ENCODE measurements at regions of chr6 and their contacts with region 1.

Region 1: DNA sequence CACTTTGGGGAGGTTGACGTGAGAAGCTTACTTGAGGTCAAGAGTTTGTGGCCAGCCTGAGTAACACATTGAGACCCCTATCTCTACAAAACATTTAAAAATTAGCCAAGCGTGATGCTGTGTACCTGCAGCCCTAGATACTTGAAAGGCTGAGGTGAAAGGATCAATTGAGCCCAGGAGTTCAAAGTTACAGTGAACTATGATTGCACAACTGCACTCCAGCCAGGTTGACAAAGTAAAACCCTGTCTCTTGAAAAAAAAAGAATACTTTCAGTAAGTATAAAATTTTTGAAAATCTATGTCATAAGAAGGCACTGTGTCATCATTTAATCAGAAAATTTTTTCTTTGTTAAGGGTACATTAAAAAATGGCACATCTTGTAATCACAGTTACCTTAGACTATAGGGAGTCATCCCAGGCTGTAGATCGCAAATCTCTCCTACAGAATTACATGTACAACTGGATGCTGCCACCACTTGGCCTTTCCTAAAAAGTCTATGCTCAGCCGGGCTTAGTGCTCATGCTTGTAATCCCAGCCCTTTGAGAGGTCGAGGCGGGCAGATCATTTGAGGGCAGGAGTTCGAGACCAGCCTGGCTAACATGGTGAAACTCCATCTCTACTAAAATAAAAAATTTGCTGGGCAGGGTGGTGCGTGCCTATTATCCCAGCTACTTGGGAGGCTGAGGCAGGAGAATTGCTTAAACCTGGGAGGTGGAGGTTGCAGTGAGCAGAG is 17.0 kb upstream of the MRS2 start:
- DNase-seq: peak; percentile 98
- ATAC-seq: peak; percentile 83
- H3K4me3 ChIP-seq: peak overlapping the region in 1 of 3 experiments; percentile 34; a peak in 1 of 6 replicates
- H3K27ac ChIP-seq: peak overlapping the region; percentile 79
- H3K4me1 ChIP-seq: peaks cover 84% of the 10 kb centered on the region
- H3K27me3 ChIP-seq: no peaks in the 10 kb centered on the region
- CTCF ChIP-seq: peak; percentile 87
- EP300 ChIP-seq: peak; percentile 94 to 98
- POLR2A ChIP-seq: no peak
- RAD21 ChIP-seq: peak; percentile 63

Region 2: DNA sequence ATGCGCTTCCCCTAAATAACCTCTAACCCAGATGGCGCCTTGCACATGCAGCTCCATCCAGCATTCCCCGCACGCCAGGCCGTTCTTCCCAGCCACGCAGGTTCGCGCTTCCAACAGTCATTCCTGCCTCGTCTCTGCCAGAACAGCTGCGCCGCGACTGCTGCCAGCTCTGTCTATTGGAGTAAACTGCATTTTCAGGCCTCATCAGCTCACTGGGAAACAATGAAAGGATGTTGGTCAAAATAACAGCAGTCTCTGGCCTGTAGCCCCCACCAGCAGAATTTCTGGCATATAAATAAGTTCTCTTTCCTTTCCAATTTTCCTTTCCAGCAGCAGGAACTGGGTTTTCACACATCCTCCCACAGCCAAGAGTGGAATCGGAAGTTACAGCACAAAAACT is 245.1 kb before region 1 on chr6:
- CTCF ChIA-PET with region 1: no interaction called
- POLR2A ChIA-PET with region 1: no interaction called
- in situ Hi-C with region 1: no loop called
- intact Hi-C with region 1: loop called (anchors 10 kb)
- DNase-seq: no peak
- ATAC-seq: no peak
- H3K4me3 ChIP-seq: no peak overlapping the region
- H3K27ac ChIP-seq: no peak overlapping the region
- H3K4me1 ChIP-seq: peaks cover 15% of the 10 kb centered on the region
- H3K27me3 ChIP-seq: no peaks in the 10 kb centered on the region
- CTCF ChIP-seq: no peak
- EP300 ChIP-seq: no peak
- POLR2A ChIP-seq: no peak
- RAD21 ChIP-seq: no peak

Region 3: GRCh38 chr6:24332306-24332705 is 53.4 kb before region 1 on chr6:
- CTCF ChIA-PET with region 1: no interaction called
- POLR2A ChIA-PET with region 1: no interaction called
- in situ Hi-C with region 1: no loop called
- intact Hi-C with region 1: loop called (anchors 1 kb)
- DNase-seq: peak; percentile 54
- ATAC-seq: no peak
- H3K4me3 ChIP-seq: no peak overlapping the region
- H3K27ac ChIP-seq: peak overlapping the region; percentile 10
- H3K4me1 ChIP-seq: peaks cover 75% of the 10 kb centered on the region
- H3K27me3 ChIP-seq: no peaks in the 10 kb centered on the region
- CTCF ChIP-seq: no peak
- EP300 ChIP-seq: no peak
- POLR2A ChIP-seq: no peak
- RAD21 ChIP-seq: no peak

Region 4: GRCh38 chr6:24340998-24341938 is 44.4 kb before region 1 on chr6:
- CTCF ChIA-PET with region 1: no interaction called
- POLR2A ChIA-PET with region 1: no interaction called
- in situ Hi-C with region 1: no loop called
- intact Hi-C with region 1: loop called (anchors 1 kb)
- DNase-seq: peak; percentile 100
- ATAC-seq: peak; percentile 99
- H3K4me3 ChIP-seq: peak overlapping the region in 1 of 3 experiments; percentile 8; a peak in 1 of 6 replicates
- H3K27ac ChIP-seq: peak overlapping the region; percentile 70
- H3K4me1 ChIP-seq: peaks cover 58% of the 10 kb centered on the region
- H3K27me3 ChIP-seq: no peaks in the 10 kb centered on the region
- CTCF ChIP-seq: no peak
- EP300 ChIP-seq: peak; percentile 69 to 96; a peak in 3 of 4 replicates
- POLR2A ChIP-seq: no peak
- RAD21 ChIP-seq: 0 out of 2 replicates have a peak, but pooled peaks have one; percentile 7

Region 5: GRCh38 chr6:24357336-24358218 is 28.1 kb before region 1 on chr6 and contains the start of gene DCDC2:
- CTCF ChIA-PET with region 1: interaction called, 4 read pairs
- POLR2A ChIA-PET with region 1: interaction called, 6 read pairs
- in situ Hi-C with region 1: no loop called
- intact Hi-C with region 1: loop called (anchors 2 kb)
- DNase-seq: peak; percentile 87
- ATAC-seq: peak; percentile 91
- H3K4me3 ChIP-seq: peak within 1 kb of the TSS; percentile 69 to 81 (median 81)
- H3K27ac ChIP-seq: peak within 1 kb of the TSS; percentile 69
- H3K4me1 ChIP-seq: peaks cover 40% of the 10 kb centered on the region
- H3K27me3 ChIP-seq: no peaks in the 10 kb centered on the region; a peak in 1 of 5 replicates
- CTCF ChIP-seq: peak; percentile 35
- EP300 ChIP-seq: 0 out of 4 replicates have a peak, but pooled peaks of 1 of the 2 experiments have one; percentile 19
- POLR2A ChIP-seq: peak; percentile 66 to 70
- RAD21 ChIP-seq: peak; percentile 58; the same call in 1 of the 2 replicates
- total RNA-seq, gene DCDC2: 36.2 and 40.4 TPM in 2 replicates

Region 6: DNA sequence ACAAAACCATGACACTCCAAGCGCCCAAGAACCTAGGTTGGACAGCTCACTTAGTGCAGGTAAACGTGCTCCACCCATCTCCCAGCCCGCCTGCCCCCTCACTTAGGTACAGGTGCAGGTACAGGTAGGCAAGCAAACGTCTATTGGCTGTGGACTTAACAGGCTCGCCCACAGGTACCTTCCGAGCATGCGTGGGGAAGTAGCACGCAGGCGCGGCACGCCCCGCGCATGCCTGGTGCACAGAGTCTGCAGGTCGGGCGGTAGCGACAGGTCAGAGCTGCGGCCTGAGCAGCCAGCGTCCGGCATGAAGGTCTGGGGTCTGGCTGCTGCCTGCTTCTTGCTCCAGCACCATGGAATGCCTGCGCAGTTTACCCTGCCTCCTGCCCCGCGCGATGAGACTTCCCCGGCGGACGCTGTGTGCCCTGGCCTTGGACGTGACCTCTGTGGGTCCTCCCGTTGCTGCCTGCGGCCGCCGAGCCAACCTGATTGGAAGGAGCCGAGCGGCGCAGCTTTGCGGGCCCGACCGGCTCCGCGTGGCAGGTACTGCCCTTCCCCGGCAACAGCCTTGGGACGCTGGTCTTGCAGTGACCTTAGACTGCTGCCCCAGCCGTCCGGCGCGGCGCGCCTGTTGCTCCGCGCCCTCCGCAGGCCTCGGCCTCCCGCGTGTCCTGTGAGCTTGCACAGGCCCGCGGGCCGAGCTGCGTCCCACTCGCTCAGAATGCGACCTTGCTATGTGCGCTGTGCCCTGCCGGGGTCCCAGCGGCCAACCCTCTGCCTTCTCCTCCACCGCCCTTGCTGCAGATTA is 17.2 kb after region 1 on chr6 and contains the start of gene MRS2:
- CTCF ChIA-PET with region 1: no interaction called
- POLR2A ChIA-PET with region 1: interaction called, 3 read pairs
- in situ Hi-C with region 1: no loop called
- intact Hi-C with region 1: loop called (anchors 2 kb)
- DNase-seq: peak; percentile 85
- ATAC-seq: peak; percentile 96
- H3K4me3 ChIP-seq: peak within 1 kb of the TSS; percentile 78 to 95 (median 83)
- H3K27ac ChIP-seq: peak within 1 kb of the TSS; percentile 79
- H3K4me1 ChIP-seq: peaks cover 71% of the 10 kb centered on the region
- H3K27me3 ChIP-seq: no peaks in the 10 kb centered on the region; a peak in 1 of 5 replicates
- CTCF ChIP-seq: peak; percentile 27; the same call in 1 of the 2 replicates
- EP300 ChIP-seq: no peak
- POLR2A ChIP-seq: peak; percentile 97 to 100
- RAD21 ChIP-seq: peak; percentile 68
- total RNA-seq, gene MRS2: 83.8 and 90.2 TPM in 2 replicates

Measured in HepG2 (cell line).